ENCODE measurements at regions of chr11 and their contacts with region 1.

Region 1: DNA sequence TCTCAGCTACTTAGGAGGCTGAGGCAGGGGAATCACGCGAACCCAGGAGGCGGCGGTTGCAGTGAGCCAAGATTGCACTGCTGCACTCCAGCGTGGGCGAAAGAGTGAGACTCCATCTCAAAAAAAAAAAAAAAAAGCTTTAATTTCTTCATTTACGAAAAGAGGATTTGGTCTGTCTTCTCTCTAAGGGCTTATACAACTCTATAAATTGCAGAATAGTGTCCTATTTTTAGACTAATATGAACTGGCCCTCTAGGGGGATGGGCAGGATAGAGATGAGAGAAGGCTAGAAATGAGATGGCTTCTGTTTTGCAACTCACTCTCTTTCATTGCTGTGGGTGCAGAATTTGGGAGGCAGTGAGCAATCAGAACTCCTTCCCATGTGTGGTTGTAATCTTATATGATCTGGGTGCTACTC is 11.3 kb downstream of the MAML2 start:
- DNase-seq: no peak
- H3K4me3 Mint-ChIP-seq: no peak overlapping the region
- H3K27ac Mint-ChIP-seq: peak overlapping the region; percentile 41
- H3K4me1 Mint-ChIP-seq: peaks cover 51% of the 10 kb centered on the region
- H3K27me3 Mint-ChIP-seq: no peaks in the 10 kb centered on the region

Region 2: DNA sequence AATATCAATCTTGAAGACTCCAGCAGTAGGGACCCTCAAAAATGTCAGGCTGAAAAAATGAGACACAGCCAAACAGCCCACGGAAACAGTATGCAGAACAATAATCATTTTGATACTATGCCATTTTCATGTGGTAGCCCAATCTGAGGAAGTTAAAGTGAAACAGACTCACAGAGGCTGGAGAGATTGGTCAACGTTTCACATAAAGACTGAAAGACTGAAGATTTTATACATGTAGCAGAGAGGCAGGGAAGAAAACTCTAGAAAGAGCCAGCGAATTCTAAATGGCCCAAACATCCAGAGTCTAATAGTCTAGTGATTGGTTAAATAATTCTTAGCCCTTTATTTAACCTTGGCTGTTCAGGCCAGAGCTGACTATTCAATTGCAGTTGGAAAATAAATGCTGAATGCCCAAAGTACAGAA is 38.1 kb before region 1 on chr11:
- intact Hi-C with region 1: loop called (anchors 1 kb)
- DNase-seq: no peak
- H3K4me3 Mint-ChIP-seq: peak overlapping the region; percentile 19
- H3K27ac Mint-ChIP-seq: peak overlapping the region; percentile 73
- H3K4me1 Mint-ChIP-seq: peaks cover 47% of the 10 kb centered on the region
- H3K27me3 Mint-ChIP-seq: no peaks in the 10 kb centered on the region

Region 3: DNA sequence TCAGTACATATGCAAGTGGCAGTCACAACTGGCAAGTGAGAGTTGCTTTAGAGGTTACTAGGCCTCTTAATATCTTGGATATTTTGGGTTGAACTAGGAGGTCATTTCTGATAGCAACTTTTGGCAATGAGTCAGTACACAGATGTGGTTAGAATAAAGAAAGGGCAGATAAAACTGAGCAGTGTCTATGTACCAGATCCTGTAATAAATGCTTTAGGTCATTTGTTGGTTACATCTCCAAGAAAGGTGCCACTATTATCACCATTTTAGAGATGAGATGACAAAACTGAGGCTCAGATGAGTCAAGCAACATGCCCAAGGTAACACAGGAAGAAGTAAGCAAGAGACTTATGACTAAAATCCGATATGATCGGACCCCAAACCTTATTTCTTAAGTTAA is 13.7 kb before region 1 on chr11:
- intact Hi-C with region 1: loop called (anchors 2 kb)
- DNase-seq: no peak
- H3K4me3 Mint-ChIP-seq: no peak overlapping the region
- H3K27ac Mint-ChIP-seq: peak overlapping the region; percentile 36
- H3K4me1 Mint-ChIP-seq: peaks cover 51% of the 10 kb centered on the region
- H3K27me3 Mint-ChIP-seq: no peaks in the 10 kb centered on the region

Measured in activated T-helper 2 cell treated with anti-CD3 and anti-CD28 coated beads, Interferon-gamma antibody, Interleukin-2, Interleukin-4, amounts not matched to agents 10 μg/mL and 5 μg/mL and 100 μg/mL, durations not matched to agents 14 hours and 24 hours and 36 hours (primary cell).